Mammary epithelial cell (primary cell): ENCODE measurements at regions of chr3 and their contacts with region 1.

Region 1: DNA sequence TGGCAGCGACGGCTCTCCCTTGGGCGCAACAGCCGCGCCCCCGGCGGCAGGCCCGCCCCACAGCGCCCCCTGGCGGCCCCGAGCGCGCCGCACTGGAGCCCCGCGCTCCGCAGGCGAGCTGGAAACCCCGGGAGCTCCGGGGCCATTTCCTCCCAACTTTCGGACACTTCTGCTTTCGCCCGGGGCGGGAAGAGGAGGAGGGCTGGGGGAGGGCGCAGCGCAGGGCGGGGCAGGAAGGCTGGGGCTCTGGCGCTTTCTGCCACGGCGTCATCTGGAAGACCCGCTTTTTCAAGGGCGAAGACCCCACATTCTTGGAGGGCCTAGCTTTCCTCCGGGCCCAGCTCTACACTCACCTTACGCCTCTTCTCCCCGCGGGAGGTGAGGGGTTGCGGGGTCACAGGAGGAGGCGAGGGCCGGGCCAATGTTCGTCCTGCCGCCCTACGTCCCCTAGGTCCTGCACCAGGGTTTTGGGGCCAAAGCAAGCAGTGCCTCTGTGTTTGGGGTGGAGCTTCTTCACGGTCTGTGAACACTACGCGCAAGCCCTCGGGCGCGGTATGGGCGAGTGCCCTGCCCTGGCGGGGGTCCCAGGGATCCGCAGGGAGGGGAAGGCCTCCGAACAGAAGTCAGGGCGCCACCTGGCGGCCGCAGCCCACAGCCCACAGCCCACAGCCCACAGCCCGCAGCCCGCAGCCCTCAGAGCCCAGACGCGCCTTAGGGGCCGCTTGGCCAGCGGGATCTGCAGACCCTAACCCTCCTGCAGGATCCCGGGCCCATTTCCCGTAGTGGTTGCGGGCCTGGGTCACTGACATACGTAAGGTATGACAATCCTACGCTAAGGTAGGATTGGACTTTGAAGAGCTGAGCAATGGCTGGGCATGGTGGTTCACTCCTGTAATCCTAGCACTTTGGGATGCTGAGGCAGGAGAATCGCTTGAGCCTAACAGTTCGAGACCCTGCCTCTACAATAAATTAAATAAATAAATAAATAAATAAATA is 31.1 kb downstream of the FOXL2 start:
- DNase-seq: peak; percentile 82
- H3K4me3 ChIP-seq: peak overlapping the region; percentile 48 to 69 (median 58)
- H3K27ac ChIP-seq: peak overlapping the region; percentile 50
- H3K4me1 ChIP-seq: peaks cover 15% of the 10 kb centered on the region
- H3K27me3 ChIP-seq: no peaks in the 10 kb centered on the region
- CTCF ChIP-seq: peak; percentile 61 to 87

Region 2: GRCh38 chr3:138180375-138181029 is 735.3 kb before region 1 on chr3:
- CTCF ChIA-PET with region 1: no interaction called
- dilution Hi-C with region 1: no loop called
- in situ Hi-C with region 1: loop called in 1 of 2 experiments (anchors 25 kb)
- intact Hi-C with region 1: loop called (anchors 5 kb)
- DNase-seq: peak; percentile 37
- H3K4me3 ChIP-seq: no peak overlapping the region
- H3K27ac ChIP-seq: no peak overlapping the region
- H3K4me1 ChIP-seq: peaks cover 7% of the 10 kb centered on the region
- H3K27me3 ChIP-seq: no peaks in the 10 kb centered on the region
- CTCF ChIP-seq: peak; percentile 46 to 71

Region 3: DNA sequence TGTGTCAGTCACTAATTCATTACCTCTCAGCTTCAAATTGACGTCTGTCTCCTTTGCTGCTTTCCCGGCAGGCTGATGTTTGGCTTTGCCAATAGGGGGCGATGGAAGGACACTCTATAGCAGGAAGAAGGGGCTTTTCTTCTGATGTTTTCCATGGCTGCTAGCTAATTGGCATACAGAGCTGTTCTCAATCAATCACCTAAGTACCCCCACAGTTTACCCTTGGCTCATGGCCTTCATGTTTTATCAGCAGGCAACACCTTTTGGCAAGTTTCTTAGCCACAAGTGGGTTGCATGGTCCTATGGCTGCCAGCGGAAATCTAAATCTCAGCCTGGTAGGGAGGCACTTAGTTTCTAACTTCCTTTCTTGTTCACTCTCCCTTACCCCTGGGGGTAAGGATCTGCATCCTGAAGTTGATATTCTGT is 436.4 kb before region 1 on chr3:
- CTCF ChIA-PET with region 1: interaction called, 15 read pairs
- dilution Hi-C with region 1: no loop called
- in situ Hi-C with region 1: no loop called
- intact Hi-C with region 1: loop called (anchors 1 kb)
- DNase-seq: peak; percentile 15
- H3K4me3 ChIP-seq: no peak overlapping the region
- H3K27ac ChIP-seq: no peak overlapping the region
- H3K4me1 ChIP-seq: no peaks in the 10 kb centered on the region
- H3K27me3 ChIP-seq: no peaks in the 10 kb centered on the region
- CTCF ChIP-seq: peak; percentile 86 to 97

Region 4: DNA sequence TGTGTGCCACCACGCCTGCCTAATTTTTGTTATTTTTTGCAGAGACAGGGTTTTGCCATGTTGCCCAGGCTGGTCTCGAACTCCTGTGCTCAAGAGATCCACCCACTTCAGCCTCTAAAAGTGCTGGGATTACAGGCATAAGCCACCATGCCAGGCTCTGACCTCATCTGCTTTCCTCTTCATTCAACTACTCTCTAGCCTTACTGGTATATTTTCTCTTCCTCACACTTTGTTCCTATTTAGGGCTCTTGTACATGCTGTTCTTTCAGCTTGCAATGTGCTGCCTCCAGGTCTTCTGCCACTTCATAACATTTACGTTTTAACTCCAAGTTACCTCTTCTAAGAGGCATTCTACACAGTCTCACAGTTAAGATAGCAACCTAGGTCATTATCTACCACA is 116.0 kb before region 1 on chr3:
- CTCF ChIA-PET with region 1: no interaction called
- dilution Hi-C with region 1: loop called (anchors 10 kb)
- in situ Hi-C with region 1: no loop called
- intact Hi-C with region 1: no loop called
- DNase-seq: no peak
- H3K4me3 ChIP-seq: no peak overlapping the region
- H3K27ac ChIP-seq: no peak overlapping the region
- H3K4me1 ChIP-seq: peaks cover 13% of the 10 kb centered on the region
- H3K27me3 ChIP-seq: no peaks in the 10 kb centered on the region
- CTCF ChIP-seq: no peak

Region 5: GRCh38 chr3:138834359-138835212 is 81.2 kb before region 1 on chr3 and contains the start of gene PIK3CB:
- CTCF ChIA-PET with region 1: no interaction called
- dilution Hi-C with region 1: loop called (anchors 5 kb)
- in situ Hi-C with region 1: loop called in 1 of 2 experiments (anchors 5 kb)
- intact Hi-C with region 1: loop called (anchors 1 kb)
- DNase-seq: peak; percentile 86
- H3K4me3 ChIP-seq: peak within 1 kb of the TSS; percentile 77 to 83 (median 81)
- H3K27ac ChIP-seq: peak within 1 kb of the TSS; percentile 75
- H3K4me1 ChIP-seq: peaks cover 9% of the 10 kb centered on the region
- H3K27me3 ChIP-seq: no peaks in the 10 kb centered on the region
- CTCF ChIP-seq: peak; percentile 11 to 46
- total RNA-seq, gene PIK3CB: 14.5 to 27.2 TPM

Region 6: DNA sequence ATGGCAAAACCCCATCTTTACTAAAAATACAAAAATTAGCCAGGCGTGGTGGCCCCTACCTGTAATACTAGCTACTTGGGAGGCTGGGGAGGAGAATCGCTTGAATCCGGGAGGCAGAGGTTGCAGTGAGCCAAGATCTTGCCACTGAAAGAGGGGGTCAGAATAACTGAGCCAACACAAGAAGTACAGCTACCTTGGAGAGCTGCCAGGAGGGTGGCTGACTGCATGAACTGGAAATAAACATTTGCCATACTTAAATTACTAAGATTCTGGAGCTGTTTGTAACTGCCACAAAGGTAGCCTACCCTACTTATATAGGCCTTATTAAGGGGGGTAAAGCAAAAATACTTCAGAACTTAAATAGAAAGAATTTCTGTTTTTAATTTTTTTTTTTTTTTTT is 65.7 kb before region 1 on chr3:
- CTCF ChIA-PET with region 1: no interaction called
- dilution Hi-C with region 1: no loop called
- in situ Hi-C with region 1: no loop called
- intact Hi-C with region 1: no loop called
- DNase-seq: no peak
- H3K4me3 ChIP-seq: no peak overlapping the region
- H3K27ac ChIP-seq: no peak overlapping the region
- H3K4me1 ChIP-seq: no peaks in the 10 kb centered on the region
- H3K27me3 ChIP-seq: no peaks in the 10 kb centered on the region
- CTCF ChIP-seq: no peak

Region 7: GRCh38 chr3:139227165-139227564 is 311.4 kb after region 1 on chr3:
- CTCF ChIA-PET with region 1: no interaction called
- dilution Hi-C with region 1: no loop called
- in situ Hi-C with region 1: no loop called
- intact Hi-C with region 1: no loop called
- DNase-seq: no peak
- H3K4me3 ChIP-seq: no peak overlapping the region
- H3K27ac ChIP-seq: no peak overlapping the region
- H3K4me1 ChIP-seq: peaks cover 9% of the 10 kb centered on the region
- H3K27me3 ChIP-seq: no peaks in the 10 kb centered on the region
- CTCF ChIP-seq: no peak